GM23248 (cell line): ENCODE measurements at regions of chr12 and their contacts with region 1.

Region 1: DNA sequence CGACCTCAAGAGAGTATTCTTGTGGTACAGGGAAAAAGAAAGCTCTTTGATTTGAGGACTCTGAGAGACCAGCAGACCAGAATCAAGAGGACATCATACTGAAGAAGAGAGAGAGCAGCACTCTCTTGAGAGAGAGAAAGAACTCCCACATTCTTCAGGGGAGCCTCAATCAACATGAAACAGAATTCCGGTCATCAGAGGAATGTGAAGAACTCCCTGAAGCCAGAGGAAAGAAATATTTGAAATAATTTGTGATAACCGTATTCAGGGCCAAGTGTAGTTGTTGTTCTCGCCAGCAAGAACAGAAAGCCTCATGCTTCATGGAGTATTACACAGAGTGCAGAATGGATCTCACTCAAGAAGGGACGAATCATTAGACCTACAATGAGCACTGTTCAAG is 363.8 kb upstream of the TMEM132C start:
- DNase-seq: peak; percentile 28
- H3K4me3 ChIP-seq: peak overlapping the region; percentile 25
- H3K27ac ChIP-seq: no peak overlapping the region
- H3K4me1 ChIP-seq: 0 out of 2 replicates have a peak, but pooled peaks cover 4% of the 10 kb centered on the region
- H3K27me3 ChIP-seq: no peaks in the 10 kb centered on the region

Region 2: DNA sequence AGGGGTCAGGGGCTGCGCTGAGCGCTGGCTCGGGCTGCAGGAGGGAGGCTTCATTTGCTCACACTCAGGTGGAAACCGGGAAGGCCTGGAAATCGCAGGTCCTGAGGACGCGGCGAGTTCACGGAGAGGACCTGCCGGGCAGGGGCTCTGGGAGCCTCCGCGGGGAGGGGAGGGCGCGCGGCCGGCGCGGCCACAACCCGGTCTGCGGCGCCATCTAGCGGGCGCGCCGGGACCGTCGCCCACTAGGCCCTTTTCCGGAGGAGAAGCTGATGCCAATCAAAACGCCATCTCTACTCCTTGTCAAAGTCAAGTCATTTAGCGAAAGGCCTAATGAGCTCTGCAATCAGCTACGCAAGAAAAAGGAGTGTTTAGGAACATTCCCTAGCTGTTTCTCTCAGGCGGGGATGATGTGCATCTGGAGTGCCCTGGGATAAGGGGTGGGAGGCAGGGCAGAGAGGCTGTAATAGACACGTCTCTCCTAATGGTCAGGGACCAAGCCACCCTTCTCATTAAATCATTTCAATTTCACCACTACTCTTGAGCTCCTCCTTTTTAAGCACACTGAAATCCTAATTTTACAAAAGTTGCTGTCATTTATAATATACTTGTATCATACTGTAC is 522.0 kb before region 1 on chr12:
- in situ Hi-C with region 1: loop called (anchors 25 kb)
- DNase-seq: peak; percentile 57
- H3K4me3 ChIP-seq: peak overlapping the region; percentile 71
- H3K27ac ChIP-seq: no peak overlapping the region
- H3K4me1 ChIP-seq: peaks cover 5% of the 10 kb centered on the region; the same call in 1 of the 2 replicates
- H3K27me3 ChIP-seq: no peaks in the 10 kb centered on the region

Region 3: GRCh38 chr12:128056136-128056801 is 153.1 kb after region 1 on chr12:
- in situ Hi-C with region 1: no loop called
- DNase-seq: no peak
- H3K4me3 ChIP-seq: no peak overlapping the region
- H3K27ac ChIP-seq: no peak overlapping the region
- H3K4me1 ChIP-seq: no peaks in the 10 kb centered on the region
- H3K27me3 ChIP-seq: no peaks in the 10 kb centered on the region

Region 4: DNA sequence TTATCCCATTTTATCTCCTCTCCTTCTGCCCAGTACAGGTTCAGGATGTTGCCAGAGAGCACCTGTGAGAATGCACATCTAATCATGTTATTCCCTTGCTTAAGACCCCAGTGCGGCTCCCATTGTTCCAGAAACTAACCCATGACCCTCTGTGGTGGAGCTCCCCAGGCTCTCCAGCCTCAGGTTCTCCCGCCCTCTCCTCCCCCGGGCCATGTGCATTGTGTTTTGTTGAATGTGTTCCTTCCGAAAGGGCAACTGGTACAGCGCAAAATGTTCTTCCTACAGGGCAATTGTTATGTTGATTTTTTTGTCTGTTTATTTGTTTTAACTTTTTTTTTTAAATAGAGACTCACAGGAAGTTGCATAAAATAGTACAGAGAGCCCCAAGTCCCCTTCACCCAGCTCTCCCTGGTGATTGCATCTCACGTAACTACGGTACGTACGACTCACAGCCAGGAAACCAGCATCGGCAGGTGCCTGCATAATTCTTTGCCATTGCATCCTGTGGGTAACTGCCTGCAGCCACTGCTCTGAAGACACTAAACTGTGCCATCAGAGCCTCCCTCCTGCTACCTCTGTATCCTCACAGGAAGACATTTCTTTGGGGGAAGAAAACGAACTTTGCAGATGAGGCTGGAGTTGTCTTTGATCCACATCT is 395.1 kb after region 1 on chr12:
- in situ Hi-C with region 1: no loop called
- DNase-seq: no peak
- H3K4me3 ChIP-seq: no peak overlapping the region
- H3K27ac ChIP-seq: no peak overlapping the region
- H3K4me1 ChIP-seq: no peaks in the 10 kb centered on the region
- H3K27me3 ChIP-seq: no peaks in the 10 kb centered on the region

Region 5: GRCh38 chr12:128969480-128970055 is 1066.4 kb after region 1 on chr12:
- in situ Hi-C with region 1: no loop called
- DNase-seq: no peak
- H3K4me3 ChIP-seq: no peak overlapping the region
- H3K27ac ChIP-seq: no peak overlapping the region
- H3K4me1 ChIP-seq: no peaks in the 10 kb centered on the region
- H3K27me3 ChIP-seq: no peaks in the 10 kb centered on the region